ENCODE measurements at regions of chr6 and their contacts with region 1.

Region 1: DNA sequence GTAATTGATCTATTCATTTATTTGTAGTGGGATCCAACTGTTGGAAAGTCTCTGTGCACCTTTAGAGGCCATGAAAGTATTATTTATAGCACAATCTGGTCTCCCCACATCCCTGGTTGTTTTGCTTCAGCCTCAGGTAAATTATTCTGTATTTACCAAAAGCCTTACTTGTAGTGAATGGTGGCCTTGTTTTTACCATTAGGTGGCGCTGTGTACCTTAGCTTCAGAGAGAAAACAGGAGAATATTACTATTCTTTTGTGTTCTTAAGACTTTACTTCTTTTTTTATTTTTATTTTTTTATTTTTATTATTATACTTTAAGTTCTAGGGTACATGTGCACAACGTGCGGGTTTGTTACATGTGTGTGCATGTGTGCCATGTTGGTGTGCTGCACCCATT is 23.7 kb downstream of the PEX7 start:
- DNase-seq: no peak
- ATAC-seq: no peak
- H3K4me3 ChIP-seq: no peak overlapping the region
- H3K27ac ChIP-seq: no peak overlapping the region
- H3K4me1 ChIP-seq: no peaks in the 10 kb centered on the region
- H3K27me3 ChIP-seq: no peaks in the 10 kb centered on the region
- CTCF ChIP-seq: peak; percentile 71; the same call in 1 of the 2 replicates

Region 2: GRCh38 chr6:135774006-135774405 is 1072.0 kb before region 1 on chr6:
- CTCF ChIA-PET with region 1: no interaction called
- POLR2A ChIA-PET with region 1: no interaction called
- in situ Hi-C with region 1: no loop called
- intact Hi-C with region 1: no loop called
- DNase-seq: no peak
- ATAC-seq: no peak
- H3K4me3 ChIP-seq: no peak overlapping the region
- H3K27ac ChIP-seq: no peak overlapping the region
- H3K4me1 ChIP-seq: no peaks in the 10 kb centered on the region
- H3K27me3 ChIP-seq: no peaks in the 10 kb centered on the region
- CTCF ChIP-seq: no peak

Region 3: DNA sequence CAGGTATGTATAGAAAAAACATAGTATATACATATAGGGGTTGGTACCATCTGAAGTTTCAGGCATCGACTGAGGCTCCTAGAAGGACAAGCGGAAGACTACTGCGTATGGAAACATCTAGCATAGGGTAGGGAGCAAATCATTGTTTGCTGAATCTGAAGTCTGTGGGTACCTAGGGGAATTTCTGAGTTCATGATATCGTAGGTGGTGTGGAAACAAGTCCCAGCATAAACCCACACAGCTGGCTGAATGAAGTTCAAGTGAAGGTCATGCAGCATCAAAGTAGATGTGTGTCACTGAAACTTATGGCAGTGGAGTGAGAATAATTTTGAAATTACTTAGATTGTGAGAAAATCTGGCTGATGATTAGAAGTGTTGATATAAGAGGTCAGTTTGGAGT is 335.3 kb before region 1 on chr6:
- CTCF ChIA-PET with region 1: no interaction called
- POLR2A ChIA-PET with region 1: no interaction called
- in situ Hi-C with region 1: no loop called
- intact Hi-C with region 1: no loop called
- DNase-seq: no peak
- ATAC-seq: no peak
- H3K4me3 ChIP-seq: no peak overlapping the region
- H3K27ac ChIP-seq: no peak overlapping the region
- H3K4me1 ChIP-seq: no peaks in the 10 kb centered on the region
- H3K27me3 ChIP-seq: no peaks in the 10 kb centered on the region
- CTCF ChIP-seq: no peak

Region 4: GRCh38 chr6:136772685-136773472 is 73.2 kb before region 1 on chr6:
- CTCF ChIA-PET with region 1: no interaction called
- POLR2A ChIA-PET with region 1: no interaction called
- in situ Hi-C with region 1: no loop called
- intact Hi-C with region 1: no loop called
- DNase-seq: no peak
- ATAC-seq: no peak
- H3K4me3 ChIP-seq: no peak overlapping the region
- H3K27ac ChIP-seq: no peak overlapping the region
- H3K4me1 ChIP-seq: no peaks in the 10 kb centered on the region; the same call in 1 of the 2 replicates
- H3K27me3 ChIP-seq: no peaks in the 10 kb centered on the region
- CTCF ChIP-seq: no peak

Region 5: DNA sequence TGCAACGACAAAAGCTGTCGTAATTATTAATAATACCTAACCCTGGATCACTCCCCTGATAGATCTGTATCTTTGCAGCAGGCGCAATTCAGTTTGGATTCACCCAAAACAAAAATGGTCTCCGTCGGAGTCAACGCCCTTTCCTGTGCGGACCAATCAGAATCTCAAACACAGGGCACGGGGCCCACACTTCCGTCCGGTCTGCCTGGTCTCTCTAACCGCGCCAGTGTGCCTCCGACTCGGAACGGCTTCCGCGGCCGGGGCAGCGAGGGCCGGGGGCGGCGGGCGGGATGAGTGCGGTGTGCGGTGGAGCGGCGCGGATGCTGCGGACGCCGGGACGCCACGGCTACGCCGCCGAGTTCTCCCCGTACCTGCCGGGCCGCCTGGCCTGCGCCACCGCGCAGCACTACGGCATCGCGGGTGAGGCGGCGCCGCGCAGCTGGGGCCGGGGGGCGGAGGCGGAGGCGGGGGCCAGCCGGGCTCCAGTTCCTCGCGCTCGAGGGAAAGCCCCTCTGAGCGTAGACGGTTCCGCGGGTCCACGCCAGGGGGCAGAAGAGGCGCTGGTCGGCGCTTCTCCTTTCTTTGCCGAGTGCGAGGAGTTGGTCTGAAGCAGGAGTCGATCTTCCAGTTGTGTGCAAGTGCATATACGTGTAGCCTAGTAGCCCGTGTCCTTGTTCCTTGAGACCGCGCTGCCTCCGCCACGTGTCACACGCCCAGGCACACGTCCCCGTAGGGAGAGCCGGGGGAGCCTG is 23.5 kb before region 1 on chr6 and contains the start of gene PEX7:
- CTCF ChIA-PET with region 1: interaction called, 10 read pairs
- POLR2A ChIA-PET with region 1: interaction called, 3 read pairs
- in situ Hi-C with region 1: no loop called
- intact Hi-C with region 1: no loop called
- DNase-seq: peak; percentile 57
- ATAC-seq: peak; percentile 98
- H3K4me3 ChIP-seq: peak within 1 kb of the TSS; percentile 74 to 78
- H3K27ac ChIP-seq: peak within 1 kb of the TSS; percentile 86
- H3K4me1 ChIP-seq: peaks cover 3% of the 10 kb centered on the region; the same call in 1 of the 2 replicates
- H3K27me3 ChIP-seq: no peaks in the 10 kb centered on the region
- CTCF ChIP-seq: peak; percentile 78
- total RNA-seq, gene PEX7: 8.8 TPM

Region 6: GRCh38 chr6:136927292-136927691 is 81.2 kb after region 1 on chr6:
- CTCF ChIA-PET with region 1: no interaction called
- POLR2A ChIA-PET with region 1: no interaction called
- in situ Hi-C with region 1: no loop called
- intact Hi-C with region 1: loop called (anchors 10 kb)
- DNase-seq: peak; percentile 15
- ATAC-seq: peak; percentile 65; the same call in 1 of the 2 replicates
- H3K4me3 ChIP-seq: no peak overlapping the region
- H3K27ac ChIP-seq: no peak overlapping the region
- H3K4me1 ChIP-seq: no peaks in the 10 kb centered on the region
- H3K27me3 ChIP-seq: no peaks in the 10 kb centered on the region; the same call in 1 of the 2 replicates
- CTCF ChIP-seq: peak; percentile 57

Region 7: DNA sequence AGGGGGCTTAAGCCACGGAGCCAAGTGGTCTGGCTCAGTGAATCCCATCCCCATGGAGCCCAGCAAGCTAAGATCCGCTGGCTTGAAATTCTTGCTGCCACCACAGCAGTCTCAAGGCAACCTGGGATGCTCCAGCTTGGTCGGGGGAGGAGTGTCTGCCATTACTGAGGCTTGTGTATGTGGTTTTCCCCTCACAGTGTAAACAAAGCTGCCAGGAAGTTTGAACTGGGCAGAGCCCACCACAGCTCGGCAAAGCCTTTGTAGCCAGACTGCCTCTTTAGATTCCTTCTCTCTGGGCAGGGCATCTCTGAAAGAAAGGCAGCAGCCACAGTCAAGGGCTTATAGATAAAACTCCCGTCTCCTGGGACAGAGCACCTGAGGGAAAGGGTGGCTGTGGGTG is 224.3 kb after region 1 on chr6:
- CTCF ChIA-PET with region 1: no interaction called
- POLR2A ChIA-PET with region 1: no interaction called
- in situ Hi-C with region 1: no loop called
- intact Hi-C with region 1: no loop called
- DNase-seq: no peak
- ATAC-seq: no peak
- H3K4me3 ChIP-seq: no peak overlapping the region
- H3K27ac ChIP-seq: no peak overlapping the region
- H3K4me1 ChIP-seq: no peaks in the 10 kb centered on the region
- H3K27me3 ChIP-seq: peaks cover 11% of the 10 kb centered on the region
- CTCF ChIP-seq: no peak